ENCODE measurements at regions of chr11 and their contacts with region 1.

Region 1: GRCh38 chr11:65888163-65888814 is at the start of gene FIBP:
- DNase-seq: peak; percentile 97
- H3K27ac ChIP-seq: peak within 1 kb of the TSS; percentile 95
- CTCF ChIP-seq: peak; percentile 92

Region 2: DNA sequence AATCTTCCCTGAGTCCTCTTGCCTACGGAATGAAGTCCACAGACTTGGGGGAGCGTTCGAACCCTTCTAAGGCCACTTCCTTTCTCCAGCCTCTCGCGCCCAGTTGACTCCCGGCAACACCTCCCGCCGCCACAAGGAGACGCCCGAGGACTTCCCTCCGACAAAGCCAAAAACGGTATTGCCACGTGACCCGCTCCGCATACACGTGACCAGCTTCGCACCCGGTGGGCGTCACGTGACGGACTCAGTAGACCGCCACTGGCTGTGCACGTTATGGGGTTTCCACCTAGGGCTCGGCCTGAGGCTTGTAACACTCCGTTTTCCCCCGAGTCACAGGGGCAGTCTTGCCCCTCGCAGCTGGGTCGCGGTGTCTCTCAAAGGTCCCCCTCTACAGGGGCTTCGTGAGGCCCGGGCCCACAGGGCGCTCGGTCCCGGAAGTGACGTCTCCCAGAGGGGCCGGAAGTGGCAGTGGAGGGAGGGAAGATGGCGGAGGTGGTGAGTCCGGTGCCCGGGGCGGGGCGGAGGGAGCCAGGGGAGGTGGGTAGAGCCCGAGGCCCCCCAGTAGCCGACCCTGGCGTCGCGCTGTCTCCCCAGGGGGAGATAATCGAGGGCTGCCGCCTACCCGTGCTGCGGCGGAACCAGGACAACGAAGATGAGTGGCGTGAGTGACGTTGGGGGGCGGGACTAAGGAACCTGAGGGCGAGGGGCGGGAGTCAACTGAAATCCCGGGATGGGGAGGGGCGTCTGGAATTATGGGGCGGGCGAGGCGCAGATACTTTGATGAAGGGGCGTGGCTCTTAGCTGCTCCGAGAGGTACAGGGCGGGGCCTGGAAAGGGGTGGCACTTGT is 176.3 kb before region 1 on chr11 and contains the start of gene KAT5:
- CTCF ChIA-PET with region 1: interaction called, 10 read pairs
- POLR2A ChIA-PET with region 1: no interaction called
- DNase-seq: peak; percentile 95
- H3K27ac ChIP-seq: peak within 1 kb of the TSS; percentile 95
- CTCF ChIP-seq: peak; percentile 99

Region 3: GRCh38 chr11:65859200-65859811 is 29.0 kb before region 1 on chr11:
- CTCF ChIA-PET with region 1: interaction called, 15 read pairs
- POLR2A ChIA-PET with region 1: interaction called, 14 read pairs
- DNase-seq: peak; percentile 93
- H3K27ac ChIP-seq: peak overlapping the region; percentile 98
- CTCF ChIP-seq: no peak

Region 4: GRCh38 chr11:65899356-65900124 is 11.3 kb after region 1 on chr11:
- CTCF ChIA-PET with region 1: interaction called, 14 read pairs
- POLR2A ChIA-PET with region 1: interaction called, 8 read pairs
- DNase-seq: peak; percentile 81
- H3K27ac ChIP-seq: peak overlapping the region; percentile 95
- CTCF ChIP-seq: no peak

Region 5: GRCh38 chr11:65988791-65989592 is 100.7 kb after region 1 on chr11:
- CTCF ChIA-PET with region 1: interaction called, 11 read pairs
- POLR2A ChIA-PET with region 1: no interaction called
- DNase-seq: peak; percentile 86
- H3K27ac ChIP-seq: peak overlapping the region; percentile 62
- CTCF ChIP-seq: peak; percentile 97

Region 6: GRCh38 chr11:66011239-66011784 is 123.0 kb after region 1 on chr11:
- CTCF ChIA-PET with region 1: no interaction called
- POLR2A ChIA-PET with region 1: no interaction called
- DNase-seq: peak; percentile 82
- H3K27ac ChIP-seq: no peak overlapping the region
- CTCF ChIP-seq: no peak